CD8-positive, alpha-beta memory T cell (primary cell): ENCODE measurements at regions of chr19 and their contacts with region 1.

Region 1: GRCh38 chr19:16572332-16573211 is at the start of gene SLC35E1:
- DNase-seq: peak; percentile 85 to 95 (median 88)
- H3K4me3 ChIP-seq: peak within 1 kb of the TSS; percentile 92
- H3K4me3 Mint-ChIP-seq: peak within 1 kb of the TSS; percentile 90 to 99 (median 96)
- H3K27ac ChIP-seq: peak within 1 kb of the TSS; percentile 94
- H3K27ac Mint-ChIP-seq: peak within 1 kb of the TSS; percentile 91 to 100 (median 100)
- H3K4me1 ChIP-seq: peaks cover 49% of the 10 kb centered on the region
- H3K4me1 Mint-ChIP-seq: peaks cover 47 to 69% (median 53%) of the 10 kb centered on the region in 3 donors
- H3K27me3 ChIP-seq: no peaks in the 10 kb centered on the region
- H3K27me3 Mint-ChIP-seq: no peaks in the 10 kb centered on the region
- total RNA-seq, gene SLC35E1: 41.9 to 43.8 TPM

Region 2: GRCh38 chr19:16542910-16543472 is 29.6 kb before region 1 on chr19:
- CTCF ChIA-PET with region 1: interaction called, 4 read pairs
- POLR2A ChIA-PET with region 1: interaction called, 15 read pairs
- DNase-seq: no peak
- H3K4me3 ChIP-seq: peak overlapping the region; percentile 99
- H3K4me3 Mint-ChIP-seq: peak overlapping the region; percentile 85 to 98 (median 91)
- H3K27ac ChIP-seq: peak overlapping the region; percentile 95
- H3K27ac Mint-ChIP-seq: peak overlapping the region; percentile 69 to 95 (median 94)
- H3K4me1 ChIP-seq: peaks cover 32% of the 10 kb centered on the region
- H3K4me1 Mint-ChIP-seq: peaks cover 38 to 53% (median 46%) of the 10 kb centered on the region in 3 donors
- H3K27me3 ChIP-seq: no peaks in the 10 kb centered on the region
- H3K27me3 Mint-ChIP-seq: no peaks in the 10 kb centered on the region

Region 3: DNA sequence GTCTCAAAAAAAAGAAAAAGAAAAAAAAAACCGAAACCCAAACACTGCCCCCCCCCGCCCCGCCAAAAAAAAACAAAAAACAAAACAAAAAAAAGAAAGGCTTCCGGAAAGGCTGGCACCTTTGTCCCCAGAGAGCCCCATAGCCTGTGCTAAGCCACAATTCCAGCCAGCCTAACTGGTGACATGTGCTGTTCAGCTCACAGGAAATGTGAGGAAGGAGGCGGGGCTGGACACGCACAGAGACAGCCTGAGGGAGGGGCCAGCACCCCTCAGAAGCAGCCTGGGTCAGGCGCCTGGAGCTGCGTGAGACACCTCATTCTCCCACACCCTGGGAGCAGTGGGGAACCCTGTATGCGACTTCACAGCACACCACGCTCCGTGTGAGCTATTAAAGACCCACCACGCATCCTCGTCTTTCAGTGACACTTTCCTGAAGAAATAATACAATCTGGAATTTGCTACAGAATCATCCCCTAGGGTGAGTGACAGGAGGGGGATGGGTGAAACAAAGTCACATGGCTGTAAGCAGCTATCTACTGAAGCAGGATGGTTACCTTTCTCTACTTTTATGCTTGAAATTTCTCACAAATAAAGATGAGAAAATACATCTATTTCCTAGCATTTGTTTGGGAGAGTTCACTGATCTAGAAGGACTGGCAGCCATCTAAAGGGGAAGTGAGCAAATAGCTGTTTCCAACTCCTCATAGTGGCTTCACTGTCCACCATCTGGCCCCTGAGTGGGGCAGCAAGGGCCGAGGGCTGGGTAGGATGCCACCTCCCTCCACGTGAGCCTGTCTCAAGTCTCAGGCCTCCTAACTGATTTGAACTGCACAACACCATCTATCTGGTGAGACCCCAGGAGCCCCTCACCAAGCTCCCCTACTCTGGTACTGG is 11.9 kb after region 1 on chr19:
- CTCF ChIA-PET with region 1: interaction called, 9 read pairs
- POLR2A ChIA-PET with region 1: interaction called, 15 read pairs
- DNase-seq: peak; percentile 89 to 96 (median 95)
- H3K4me3 ChIP-seq: peak overlapping the region; percentile 74
- H3K4me3 Mint-ChIP-seq: peak overlapping the region; percentile 74 to 92 (median 79)
- H3K27ac ChIP-seq: peak overlapping the region; percentile 63
- H3K27ac Mint-ChIP-seq: peak overlapping the region; percentile 81 to 100 (median 97)
- H3K4me1 ChIP-seq: peaks cover 81% of the 10 kb centered on the region
- H3K4me1 Mint-ChIP-seq: peaks cover 77 to 94% (median 82%) of the 10 kb centered on the region in 3 donors
- H3K27me3 ChIP-seq: no peaks in the 10 kb centered on the region
- H3K27me3 Mint-ChIP-seq: peaks cover 0 to 4% of the 10 kb centered on the region in 2 donors

Region 4: DNA sequence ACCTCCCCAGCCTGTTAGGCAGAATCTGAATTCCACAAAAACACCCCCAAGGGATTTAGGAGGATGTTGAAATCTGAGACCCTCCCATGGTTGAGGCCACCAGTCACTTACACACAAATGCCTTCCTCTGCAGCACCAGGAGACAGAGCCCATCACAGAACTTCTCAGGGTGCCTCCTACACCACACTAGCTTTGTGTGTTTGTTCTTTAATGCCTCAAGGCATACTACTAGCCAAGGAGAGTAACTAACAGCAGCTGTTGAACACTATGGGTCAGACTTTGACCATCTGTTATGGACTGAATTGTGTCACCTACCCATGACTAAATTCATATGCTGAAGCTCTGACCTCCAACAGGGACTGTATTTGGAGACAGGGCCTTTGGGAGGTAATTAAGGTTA is 65.0 kb after region 1 on chr19:
- CTCF ChIA-PET with region 1: no interaction called
- POLR2A ChIA-PET with region 1: no interaction called
- DNase-seq: no peak
- H3K4me3 ChIP-seq: no peak overlapping the region
- H3K4me3 Mint-ChIP-seq: no peak overlapping the region
- H3K27ac ChIP-seq: no peak overlapping the region
- H3K27ac Mint-ChIP-seq: peak overlapping the region in 4 of 8 donors; percentile 17 to 88 (median 34)
- H3K4me1 ChIP-seq: no peaks in the 10 kb centered on the region
- H3K4me1 Mint-ChIP-seq: peaks cover 13 to 26% (median 18%) of the 10 kb centered on the region in 3 donors
- H3K27me3 ChIP-seq: no peaks in the 10 kb centered on the region
- H3K27me3 Mint-ChIP-seq: no peaks in the 10 kb centered on the region